ENCODE measurements at regions of chr12 and their contacts with region 1.

Region 1: DNA sequence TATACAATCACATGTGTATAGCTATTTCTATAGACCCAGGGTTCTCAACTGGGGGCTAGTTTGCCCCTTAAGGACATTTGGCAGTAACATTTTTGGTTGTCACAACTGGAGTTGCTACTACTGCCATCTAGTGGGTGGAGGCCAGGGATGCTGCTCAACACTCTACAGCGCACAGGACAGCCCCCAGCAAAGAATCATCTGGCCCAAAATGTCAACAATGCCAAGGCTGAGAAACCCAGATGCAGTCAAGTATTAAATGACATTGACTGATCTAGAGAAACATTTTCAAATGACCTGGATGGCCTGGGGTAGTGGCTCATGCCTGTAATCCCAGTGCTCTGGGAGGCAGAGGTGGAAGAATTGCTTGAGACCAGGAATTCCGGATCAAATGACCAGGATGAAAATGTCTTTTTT is 5.8 kb downstream of the WSB2 start:
- DNase-seq: peak; percentile 87
- H3K4me3 Mint-ChIP-seq: no peak overlapping the region
- H3K27ac Mint-ChIP-seq: peak overlapping the region; percentile 9
- H3K4me1 Mint-ChIP-seq: peaks cover 60% of the 10 kb centered on the region
- H3K27me3 Mint-ChIP-seq: no peaks in the 10 kb centered on the region

Region 2: DNA sequence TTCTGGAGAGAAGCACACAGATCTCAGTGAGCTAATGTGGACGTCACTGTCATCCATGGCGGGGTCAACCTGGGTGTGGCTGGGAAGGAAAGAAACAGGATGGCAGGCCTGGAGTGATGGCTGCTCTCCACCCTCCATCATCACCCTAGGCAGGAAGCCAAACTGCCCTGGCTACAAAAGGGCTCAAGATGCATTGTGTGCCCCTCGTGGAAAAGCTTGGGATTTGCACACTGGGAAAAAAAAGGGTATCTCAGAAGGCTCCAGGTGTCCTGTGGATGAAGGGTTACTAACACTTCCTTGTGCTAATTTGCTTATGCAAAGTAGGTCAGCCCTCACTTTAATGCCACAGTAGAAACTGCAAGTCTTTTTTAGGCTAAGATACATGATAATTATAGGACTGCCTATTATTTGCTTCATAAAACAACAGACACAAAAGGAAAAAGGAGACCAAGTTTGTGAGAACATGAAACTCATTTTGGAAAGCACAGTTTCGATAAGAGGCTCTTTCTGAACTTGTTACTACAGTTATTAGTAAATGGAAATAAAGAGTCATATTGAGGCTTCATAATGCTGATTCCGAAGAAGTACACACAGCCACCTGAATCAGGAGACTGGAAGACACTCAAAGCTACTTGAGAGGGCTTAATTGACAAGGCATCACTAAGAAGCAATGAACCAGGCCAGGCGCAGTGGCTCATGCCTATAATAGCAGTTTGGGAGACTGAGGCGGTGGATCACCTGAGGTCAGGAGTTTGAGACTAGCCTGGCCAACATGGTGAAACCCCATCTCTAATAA is 19.7 kb before region 1 on chr12:
- CTCF ChIA-PET with region 1: interaction called, 20 read pairs
- POLR2A ChIA-PET with region 1: interaction called, 48 read pairs
- intact Hi-C with region 1: loop called (anchors 1 kb)
- DNase-seq: peak; percentile 55
- H3K4me3 Mint-ChIP-seq: peak overlapping the region; percentile 31
- H3K27ac Mint-ChIP-seq: peak overlapping the region; percentile 94
- H3K4me1 Mint-ChIP-seq: peaks cover 57% of the 10 kb centered on the region
- H3K27me3 Mint-ChIP-seq: no peaks in the 10 kb centered on the region

Region 3: GRCh38 chr12:118044075-118044474 is 11.1 kb before region 1 on chr12:
- CTCF ChIA-PET with region 1: interaction called, 29 read pairs
- POLR2A ChIA-PET with region 1: interaction called, 41 read pairs
- intact Hi-C with region 1: loop called (anchors 1 kb)
- DNase-seq: peak; percentile 58
- H3K4me3 Mint-ChIP-seq: peak overlapping the region; percentile 46
- H3K27ac Mint-ChIP-seq: peak overlapping the region; percentile 97
- H3K4me1 Mint-ChIP-seq: peaks cover 59% of the 10 kb centered on the region
- H3K27me3 Mint-ChIP-seq: no peaks in the 10 kb centered on the region

Region 4: GRCh38 chr12:118089782-118090181 is 34.6 kb after region 1 on chr12:
- CTCF ChIA-PET with region 1: no interaction called
- POLR2A ChIA-PET with region 1: no interaction called
- intact Hi-C with region 1: no loop called
- DNase-seq: no peak
- H3K4me3 Mint-ChIP-seq: no peak overlapping the region
- H3K27ac Mint-ChIP-seq: no peak overlapping the region
- H3K4me1 Mint-ChIP-seq: no peaks in the 10 kb centered on the region
- H3K27me3 Mint-ChIP-seq: no peaks in the 10 kb centered on the region

Region 5: GRCh38 chr12:118307069-118307954 is 252.2 kb after region 1 on chr12:
- CTCF ChIA-PET with region 1: no interaction called
- POLR2A ChIA-PET with region 1: no interaction called
- intact Hi-C with region 1: loop called (anchors 10 kb)
- DNase-seq: peak; percentile 79
- H3K4me3 Mint-ChIP-seq: peak overlapping the region; percentile 64
- H3K27ac Mint-ChIP-seq: peak overlapping the region; percentile 86
- H3K4me1 Mint-ChIP-seq: peaks cover 41% of the 10 kb centered on the region
- H3K27me3 Mint-ChIP-seq: no peaks in the 10 kb centered on the region